ENCODE measurements at regions of chr5 and their contacts with region 1.

Region 1: GRCh38 chr5:38845526-38846378 is at the start of gene OSMR:
- DNase-seq: peak; percentile 92 to 100
- H3K4me3 ChIP-seq: peak within 1 kb of the TSS; percentile 79
- H3K27ac ChIP-seq: peak within 1 kb of the TSS; percentile 95
- H3K4me1 ChIP-seq: peaks cover 48% of the 10 kb centered on the region
- H3K27me3 ChIP-seq: no peaks in the 10 kb centered on the region
- CTCF ChIP-seq: no peak
- total RNA-seq, gene OSMR: 45.3 and 65.4 TPM in 2 replicates

Region 2: GRCh38 chr5:38414348-38414747 is 431.4 kb before region 1 on chr5:
- CTCF ChIA-PET with region 1: interaction called, 10 read pairs
- POLR2A ChIA-PET with region 1: no interaction called
- intact Hi-C with region 1: no loop called
- DNase-seq: no peak
- H3K4me3 ChIP-seq: no peak overlapping the region
- H3K27ac ChIP-seq: no peak overlapping the region
- H3K4me1 ChIP-seq: no peaks in the 10 kb centered on the region
- H3K27me3 ChIP-seq: peaks cover 60% of the 10 kb centered on the region
- CTCF ChIP-seq: no peak

Region 3: DNA sequence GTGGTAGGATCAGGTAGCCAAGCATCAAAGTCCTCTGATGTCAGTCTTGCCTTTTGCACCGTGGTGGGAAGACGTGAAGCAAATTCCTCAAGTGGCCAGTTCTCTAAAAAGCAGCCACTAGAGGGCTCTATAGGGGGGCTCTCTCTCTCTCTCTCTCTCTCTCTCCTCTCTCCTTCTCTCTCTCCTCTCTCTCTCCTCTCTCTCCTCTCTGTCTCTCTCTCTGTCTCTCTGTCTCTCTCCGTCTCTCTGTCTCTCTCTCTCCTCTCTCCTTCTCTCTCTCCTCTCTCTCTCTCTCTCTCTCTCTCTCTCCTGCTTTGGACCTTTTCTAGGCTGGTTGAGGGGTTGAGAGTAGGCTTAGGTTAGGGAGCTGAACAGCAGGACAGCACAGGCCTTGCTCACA is 13.8 kb before region 1 on chr5:
- CTCF ChIA-PET with region 1: interaction called, 6 read pairs
- POLR2A ChIA-PET with region 1: interaction called, 18 read pairs
- intact Hi-C with region 1: no loop called
- DNase-seq: no peak
- H3K4me3 ChIP-seq: no peak overlapping the region
- H3K27ac ChIP-seq: no peak overlapping the region
- H3K4me1 ChIP-seq: peaks cover 18% of the 10 kb centered on the region
- H3K27me3 ChIP-seq: no peaks in the 10 kb centered on the region
- CTCF ChIP-seq: peak; percentile 75

Region 4: GRCh38 chr5:38871790-38872551 is 26.2 kb after region 1 on chr5:
- CTCF ChIA-PET with region 1: interaction called, 9 read pairs
- POLR2A ChIA-PET with region 1: interaction called, 8 read pairs
- intact Hi-C with region 1: loop called (anchors 1 kb)
- DNase-seq: peak; percentile 76 to 100
- H3K4me3 ChIP-seq: 0 out of 2 replicates have a peak overlapping the region, but pooled peaks have one; percentile 16
- H3K27ac ChIP-seq: peak overlapping the region; percentile 97
- H3K4me1 ChIP-seq: peaks cover 51% of the 10 kb centered on the region
- H3K27me3 ChIP-seq: no peaks in the 10 kb centered on the region
- CTCF ChIP-seq: no peak

Region 5: GRCh38 chr5:39194466-39195136 is 348.8 kb after region 1 on chr5:
- CTCF ChIA-PET with region 1: no interaction called
- POLR2A ChIA-PET with region 1: no interaction called
- intact Hi-C with region 1: loop called (anchors 5 kb)
- DNase-seq: peak; percentile 78 to 93
- H3K4me3 ChIP-seq: peak overlapping the region; percentile 13; the same call in 1 of the 2 replicates
- H3K27ac ChIP-seq: peak overlapping the region; percentile 91
- H3K4me1 ChIP-seq: peaks cover 56% of the 10 kb centered on the region
- H3K27me3 ChIP-seq: no peaks in the 10 kb centered on the region
- CTCF ChIP-seq: no peak

Region 6: DNA sequence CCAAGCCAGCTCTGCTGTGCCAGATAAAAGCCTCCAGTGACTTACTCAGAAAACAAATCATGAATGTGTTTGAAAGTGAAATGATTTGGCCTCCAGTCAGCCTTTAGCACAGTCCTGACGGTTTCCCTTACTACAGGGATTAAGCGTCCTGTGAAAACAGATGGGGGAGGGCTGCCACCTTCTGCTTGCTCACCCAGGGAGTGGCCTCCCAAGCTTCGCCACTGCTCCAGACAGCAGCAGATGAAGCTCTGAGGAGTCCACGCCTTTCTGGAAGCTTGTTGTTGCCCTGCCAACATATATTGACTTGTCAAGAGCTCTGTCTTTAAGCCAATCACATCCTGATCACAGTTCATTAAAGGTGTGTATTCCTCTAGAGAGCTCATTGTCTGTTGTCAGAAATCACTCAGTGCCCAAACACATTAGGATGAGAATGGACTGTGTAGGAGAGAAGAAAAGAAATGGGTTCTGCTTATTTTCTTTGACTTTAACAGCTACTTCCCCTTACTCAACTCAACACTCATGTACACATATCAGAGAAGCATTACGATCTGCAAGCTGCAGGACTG is 378.5 kb after region 1 on chr5:
- CTCF ChIA-PET with region 1: no interaction called
- POLR2A ChIA-PET with region 1: no interaction called
- intact Hi-C with region 1: loop called (anchors 10 kb)
- DNase-seq: peak; percentile 70 to 89
- H3K4me3 ChIP-seq: no peak overlapping the region
- H3K27ac ChIP-seq: peak overlapping the region; percentile 4; the same call in 1 of the 2 replicates
- H3K4me1 ChIP-seq: peaks cover 34% of the 10 kb centered on the region
- H3K27me3 ChIP-seq: no peaks in the 10 kb centered on the region
- CTCF ChIP-seq: no peak

Region 7: DNA sequence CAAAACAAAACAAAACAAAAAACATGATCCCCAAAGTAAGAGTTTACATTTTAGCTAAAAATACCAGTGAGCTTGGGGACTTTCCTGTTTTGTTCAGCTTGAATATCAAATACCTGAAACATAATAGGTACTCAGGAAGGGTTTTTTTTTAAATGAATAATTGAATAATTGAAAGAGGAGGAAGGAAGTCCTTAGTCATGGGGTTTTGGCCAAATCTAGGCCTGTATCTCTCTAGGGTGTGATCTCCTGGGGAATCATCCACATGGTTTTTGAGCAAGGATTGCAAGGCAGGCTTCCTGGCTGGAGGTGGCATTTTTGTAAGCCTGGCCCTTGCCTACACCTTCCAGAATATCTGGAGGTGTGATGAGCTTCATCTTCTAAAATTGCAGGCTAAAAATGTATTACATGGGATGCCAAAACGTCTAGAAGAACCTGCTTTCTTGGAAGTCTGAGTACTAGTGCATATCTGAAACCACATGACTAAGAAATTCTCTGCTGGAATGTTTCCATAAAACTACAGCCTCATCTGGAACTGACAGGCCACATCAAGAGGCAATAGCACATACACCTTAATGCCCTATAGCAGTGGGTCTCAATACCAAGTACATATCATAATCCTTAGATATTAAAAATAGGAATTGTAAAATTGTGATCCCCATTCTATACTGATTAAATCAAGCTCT is 508.1 kb after region 1 on chr5:
- CTCF ChIA-PET with region 1: no interaction called
- POLR2A ChIA-PET with region 1: interaction called, 14 read pairs
- intact Hi-C with region 1: no loop called
- DNase-seq: no peak
- H3K4me3 ChIP-seq: no peak overlapping the region
- H3K27ac ChIP-seq: no peak overlapping the region
- H3K4me1 ChIP-seq: no peaks in the 10 kb centered on the region
- H3K27me3 ChIP-seq: no peaks in the 10 kb centered on the region
- CTCF ChIP-seq: no peak